Activated CD4-positive, alpha-beta memory T cell treated with anti-CD3 and anti-CD28 coated beads, Interleukin-2, amount 10 ng/mL, durations not matched to agents 7 days and 5 days (primary cell): ENCODE measurements at regions of chr9 and their contacts with region 1.

Region 1: GRCh38 chr9:107340920-107341632 is 58.0 kb downstream of the RAD23B start:
- DNase-seq: peak; percentile 81
- H3K4me3 Mint-ChIP-seq: no peak overlapping the region
- H3K27ac Mint-ChIP-seq: no peak overlapping the region
- H3K4me1 Mint-ChIP-seq: peaks cover 13% of the 10 kb centered on the region
- H3K27me3 Mint-ChIP-seq: no peaks in the 10 kb centered on the region

Region 2: DNA sequence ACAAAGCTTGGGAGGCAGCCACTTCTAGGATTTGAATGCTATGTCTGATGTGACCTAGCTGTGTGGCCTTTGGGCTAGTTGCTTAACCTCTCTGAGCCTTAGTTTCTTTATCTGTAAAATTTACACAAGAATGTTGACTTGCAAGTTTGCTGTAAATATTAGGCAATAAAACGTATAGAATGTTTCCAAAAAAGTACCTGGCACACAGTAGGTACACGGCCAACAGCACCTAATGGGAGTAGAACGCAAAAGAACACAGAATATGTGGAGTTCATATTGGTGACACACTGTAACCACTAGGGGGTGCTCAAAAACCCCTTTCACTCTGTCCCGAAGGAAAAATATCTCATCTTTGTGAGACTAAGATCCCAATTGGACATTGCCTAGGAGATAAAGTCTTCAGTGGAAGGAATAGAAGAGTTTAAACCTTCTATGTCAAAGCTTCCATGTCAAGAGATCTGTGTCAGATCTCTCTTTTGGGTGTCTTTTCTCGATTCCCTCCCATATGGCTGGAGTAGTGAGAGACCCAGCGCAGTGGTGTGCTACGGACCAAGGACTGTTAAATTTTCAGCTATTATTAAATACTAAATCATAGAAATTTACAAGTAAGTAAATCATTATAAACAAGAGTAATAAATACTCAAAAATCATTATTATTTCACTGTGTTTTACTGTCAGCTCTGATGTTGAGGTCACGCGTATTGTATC is 203.4 kb before region 1 on chr9:
- CTCF ChIA-PET with region 1: interaction called, 26 read pairs
- POLR2A ChIA-PET with region 1: no interaction called
- DNase-seq: no peak
- H3K4me3 Mint-ChIP-seq: no peak overlapping the region
- H3K27ac Mint-ChIP-seq: no peak overlapping the region
- H3K4me1 Mint-ChIP-seq: no peaks in the 10 kb centered on the region
- H3K27me3 Mint-ChIP-seq: peaks cover 10% of the 10 kb centered on the region

Region 3: GRCh38 chr9:107222020-107222522 is 119.0 kb before region 1 on chr9:
- CTCF ChIA-PET with region 1: interaction called, 11 read pairs
- POLR2A ChIA-PET with region 1: no interaction called
- DNase-seq: no peak
- H3K4me3 Mint-ChIP-seq: no peak overlapping the region
- H3K27ac Mint-ChIP-seq: no peak overlapping the region
- H3K4me1 Mint-ChIP-seq: no peaks in the 10 kb centered on the region
- H3K27me3 Mint-ChIP-seq: peaks cover 21% of the 10 kb centered on the region

Region 4: DNA sequence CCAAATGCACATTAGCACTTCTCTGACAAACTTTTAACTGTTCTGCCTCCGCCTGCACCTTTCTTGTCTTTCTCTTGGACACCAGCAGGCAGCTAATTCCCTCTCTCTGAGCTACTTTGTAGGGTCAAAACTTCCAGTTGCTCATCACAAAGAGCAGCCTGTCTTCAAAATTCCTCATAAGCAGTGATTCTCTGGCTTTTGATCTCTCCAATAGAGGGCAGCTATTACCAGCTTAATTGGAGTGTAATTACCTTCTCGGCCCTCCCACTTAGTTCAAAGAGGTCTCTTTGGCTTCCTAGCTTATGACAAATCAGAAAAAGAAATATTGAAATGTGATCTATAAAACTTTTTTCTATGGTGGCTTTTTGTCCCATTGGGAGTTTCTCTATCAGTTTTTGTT is 101.6 kb before region 1 on chr9:
- CTCF ChIA-PET with region 1: interaction called, 26 read pairs
- POLR2A ChIA-PET with region 1: no interaction called
- DNase-seq: no peak
- H3K4me3 Mint-ChIP-seq: no peak overlapping the region
- H3K27ac Mint-ChIP-seq: no peak overlapping the region
- H3K4me1 Mint-ChIP-seq: peaks cover 13% of the 10 kb centered on the region
- H3K27me3 Mint-ChIP-seq: peaks cover 4% of the 10 kb centered on the region

Region 5: DNA sequence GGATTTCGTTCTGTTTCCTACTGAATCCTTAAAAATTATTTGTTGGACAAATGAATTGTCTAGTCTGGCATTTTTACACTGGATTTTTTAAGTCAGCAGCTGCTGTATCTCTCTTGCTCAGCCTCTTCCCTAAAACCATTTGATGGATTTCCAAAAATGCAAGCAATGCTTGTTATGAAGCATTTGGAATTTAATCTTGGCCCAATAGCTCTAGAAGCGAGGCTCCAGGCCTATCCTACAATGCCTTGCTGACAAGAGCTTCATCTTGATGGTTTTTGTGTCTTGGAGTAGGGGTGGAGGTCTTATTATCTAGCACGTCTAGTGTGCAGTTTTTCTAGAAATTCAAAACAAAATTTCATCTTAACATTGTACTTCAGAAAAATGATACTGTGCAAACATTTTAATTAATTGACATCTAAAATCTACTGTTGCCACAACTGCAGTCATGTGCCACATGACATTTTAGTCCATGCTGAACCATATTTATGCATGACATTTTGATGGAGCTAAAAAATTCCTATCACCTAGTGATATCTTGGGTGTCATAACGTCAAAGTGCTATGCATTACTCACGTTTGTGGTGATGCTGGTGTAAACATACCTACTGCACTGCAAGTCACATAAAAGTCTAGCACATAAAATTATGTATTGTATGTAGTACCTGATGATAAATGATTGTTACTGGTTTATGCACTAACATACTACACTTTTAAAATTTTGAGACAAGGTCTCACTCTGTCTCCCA is 63.9 kb before region 1 on chr9:
- CTCF ChIA-PET with region 1: interaction called, 11 read pairs
- POLR2A ChIA-PET with region 1: interaction called, 7 read pairs
- DNase-seq: no peak
- H3K4me3 Mint-ChIP-seq: no peak overlapping the region
- H3K27ac Mint-ChIP-seq: no peak overlapping the region
- H3K4me1 Mint-ChIP-seq: peaks cover 13% of the 10 kb centered on the region
- H3K27me3 Mint-ChIP-seq: peaks cover 27% of the 10 kb centered on the region

Region 6: DNA sequence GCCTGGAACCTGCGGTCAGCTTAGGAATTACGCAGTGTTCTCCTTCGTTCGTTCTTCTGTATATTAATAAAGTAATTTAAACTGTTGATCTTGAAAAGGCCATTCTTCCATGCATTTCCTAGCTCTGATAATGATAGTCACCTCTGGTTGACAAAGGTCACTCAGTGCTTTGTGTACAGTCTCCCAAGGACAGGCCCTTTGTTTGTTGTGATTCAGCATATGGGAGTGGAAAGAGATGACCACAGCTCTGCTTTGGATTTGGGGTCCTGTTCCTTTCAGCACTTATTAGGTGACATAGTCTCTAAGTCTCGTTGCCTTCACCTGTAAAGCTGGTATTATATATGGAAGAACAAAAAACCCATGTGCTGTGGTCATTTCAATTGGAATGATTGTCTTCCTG is 18.4 kb before region 1 on chr9:
- CTCF ChIA-PET with region 1: interaction called, 21 read pairs
- POLR2A ChIA-PET with region 1: interaction called, 3 read pairs
- DNase-seq: no peak
- H3K4me3 Mint-ChIP-seq: no peak overlapping the region
- H3K27ac Mint-ChIP-seq: no peak overlapping the region
- H3K4me1 Mint-ChIP-seq: peaks cover 12% of the 10 kb centered on the region
- H3K27me3 Mint-ChIP-seq: no peaks in the 10 kb centered on the region

Region 7: DNA sequence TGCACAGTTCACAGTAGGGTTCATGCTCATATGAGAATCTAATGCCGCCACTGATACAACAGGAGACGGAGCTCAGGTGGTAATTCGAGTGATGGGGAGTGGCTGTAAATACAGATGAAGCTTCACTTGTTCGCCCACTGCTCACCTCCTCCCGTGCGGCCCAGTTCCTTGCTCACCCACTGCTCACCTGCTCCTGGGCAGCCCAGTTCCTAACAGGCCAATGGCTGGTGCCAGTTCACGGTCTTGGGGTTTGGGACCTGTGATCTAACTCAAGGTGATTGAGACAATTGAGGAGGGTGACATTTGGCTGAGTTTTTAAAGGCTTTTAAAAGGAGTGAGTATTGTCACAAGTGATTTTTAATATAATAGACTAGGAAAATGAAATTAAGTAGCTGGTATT is 12.6 kb before region 1 on chr9:
- CTCF ChIA-PET with region 1: interaction called, 21 read pairs
- POLR2A ChIA-PET with region 1: interaction called, 3 read pairs
- DNase-seq: no peak
- H3K4me3 Mint-ChIP-seq: no peak overlapping the region
- H3K27ac Mint-ChIP-seq: no peak overlapping the region
- H3K4me1 Mint-ChIP-seq: peaks cover 7% of the 10 kb centered on the region
- H3K27me3 Mint-ChIP-seq: no peaks in the 10 kb centered on the region